ENCODE measurements at regions of chr11 and their contacts with region 1.

Region 1: GRCh38 chr11:129895126-129896041 is at the start of gene NFRKB:
- DNase-seq: peak; percentile 93
- H3K4me3 ChIP-seq: peak within 1 kb of the TSS; percentile 66 to 97 (median 88)
- H3K27ac ChIP-seq: peak within 1 kb of the TSS; percentile 84 to 92 (median 86)
- H3K4me1 ChIP-seq: peaks cover 10 to 15% (median 13%) of the 10 kb centered on the region in 4 donors
- H3K27me3 ChIP-seq: no peaks in the 10 kb centered on the region
- CTCF ChIP-seq: no peak
- EP300 ChIP-seq: no peak
- POLR2A ChIP-seq: peak; percentile 64
- total RNA-seq, gene NFRKB: 28.7 to 79.2 (median 37.0) TPM

Region 2: GRCh38 chr11:129930296-129930695 is 34.9 kb after region 1 on chr11:
- in situ Hi-C with region 1: no loop called
- intact Hi-C with region 1: loop called (anchors 1 kb)
- DNase-seq: no peak
- H3K4me3 ChIP-seq: no peak overlapping the region
- H3K27ac ChIP-seq: no peak overlapping the region
- H3K4me1 ChIP-seq: no peaks in the 10 kb centered on the region
- H3K27me3 ChIP-seq: no peaks in the 10 kb centered on the region
- CTCF ChIP-seq: no peak
- EP300 ChIP-seq: no peak
- POLR2A ChIP-seq: no peak

Region 3: GRCh38 chr11:130189492-130190210 is 294.3 kb after region 1 on chr11:
- in situ Hi-C with region 1: no loop called
- intact Hi-C with region 1: no loop called
- DNase-seq: peak; percentile 81
- H3K4me3 ChIP-seq: peak overlapping the region in 1 of 4 donors; percentile 10
- H3K27ac ChIP-seq: peak overlapping the region; percentile 83 to 93 (median 88)
- H3K4me1 ChIP-seq: peaks cover 8 to 50% (median 31%) of the 10 kb centered on the region in 4 donors
- H3K27me3 ChIP-seq: no peaks in the 10 kb centered on the region
- CTCF ChIP-seq: no peak
- EP300 ChIP-seq: no peak
- POLR2A ChIP-seq: peak; percentile 65

Measured in transverse colon (tissue), 4 donors.